ENCODE measurements at regions of chr3 and their contacts with region 1.

Region 1: DNA sequence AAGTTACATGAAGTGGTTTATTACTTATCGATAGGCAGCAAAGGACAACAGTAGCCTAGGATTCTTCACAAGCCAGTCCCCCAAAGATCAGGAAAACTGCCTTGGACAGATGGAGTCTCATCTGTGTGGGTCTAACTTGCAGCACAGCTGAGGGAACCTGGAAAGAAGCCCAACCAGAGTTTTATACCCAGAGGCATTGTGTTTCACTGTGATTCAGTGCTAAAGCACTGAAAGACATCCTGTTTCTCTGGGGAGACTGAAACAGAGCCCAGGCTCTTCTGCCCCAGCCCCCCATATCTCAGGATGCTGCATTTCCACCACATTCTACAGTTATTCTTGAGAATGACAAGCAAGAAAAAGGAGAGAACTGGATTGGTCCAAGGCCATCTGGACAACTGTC is 48.2 kb upstream of the PYDC2 start:
- DNase-seq: no peak
- ATAC-seq: no peak
- H3K4me3 ChIP-seq: no peak overlapping the region
- H3K27ac ChIP-seq: no peak overlapping the region
- H3K4me1 ChIP-seq: no peaks in the 10 kb centered on the region
- H3K27me3 ChIP-seq: no peaks in the 10 kb centered on the region
- CTCF ChIP-seq: no peak
- EP300 ChIP-seq: no peak
- POLR2A ChIP-seq: no peak
- RAD21 ChIP-seq: no peak

Region 2: DNA sequence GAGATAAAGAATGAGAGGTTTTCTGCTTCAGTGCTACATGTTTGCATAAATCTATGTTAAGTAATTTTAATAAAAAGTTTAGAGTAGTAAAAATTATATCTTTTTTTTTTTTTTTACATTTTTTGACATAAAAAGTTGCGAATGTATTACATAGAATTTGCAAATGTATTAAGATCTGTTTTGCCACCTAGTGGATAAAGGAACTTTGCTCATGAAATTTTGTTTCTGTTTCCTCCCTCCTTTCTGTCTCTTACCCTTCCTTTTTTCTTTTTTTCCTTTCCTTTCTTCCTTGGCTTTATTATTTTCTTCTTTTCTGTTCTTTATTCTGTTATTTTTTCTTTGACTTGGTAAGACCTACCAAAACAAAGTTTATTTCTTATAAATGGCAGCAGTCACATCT is 23.9 kb before region 1 on chr3:
- CTCF ChIA-PET with region 1: no interaction called
- POLR2A ChIA-PET with region 1: no interaction called
- in situ Hi-C with region 1: no loop called
- intact Hi-C with region 1: no loop called
- DNase-seq: no peak
- ATAC-seq: no peak
- H3K4me3 ChIP-seq: no peak overlapping the region
- H3K27ac ChIP-seq: no peak overlapping the region
- H3K4me1 ChIP-seq: no peaks in the 10 kb centered on the region
- H3K27me3 ChIP-seq: no peaks in the 10 kb centered on the region
- CTCF ChIP-seq: no peak
- EP300 ChIP-seq: no peak
- POLR2A ChIP-seq: no peak
- RAD21 ChIP-seq: no peak

Region 3: DNA sequence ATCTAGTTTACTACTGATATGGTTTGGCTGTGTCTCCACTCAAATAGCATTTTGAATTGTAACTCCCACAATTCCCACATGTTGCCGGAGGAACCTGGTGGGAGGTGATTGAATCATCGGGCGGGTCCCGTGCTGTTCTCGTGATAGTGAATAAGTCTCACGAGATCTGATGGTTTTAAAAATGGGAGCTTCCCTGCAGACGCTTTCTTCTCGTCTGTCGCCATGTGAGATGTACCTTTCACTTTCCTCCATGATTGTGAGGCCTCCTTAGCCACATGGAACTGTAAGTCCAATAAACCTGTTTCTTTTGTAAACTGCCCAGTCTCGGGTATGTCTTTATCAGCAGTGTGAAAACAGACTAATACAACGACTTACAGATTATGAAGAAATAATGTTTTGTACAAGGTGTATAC is 12.6 kb after region 1 on chr3:
- CTCF ChIA-PET with region 1: no interaction called
- POLR2A ChIA-PET with region 1: no interaction called
- in situ Hi-C with region 1: no loop called
- intact Hi-C with region 1: no loop called
- DNase-seq: no peak
- ATAC-seq: no peak
- H3K4me3 ChIP-seq: no peak overlapping the region
- H3K27ac ChIP-seq: no peak overlapping the region
- H3K4me1 ChIP-seq: peaks cover 6% of the 10 kb centered on the region
- H3K27me3 ChIP-seq: no peaks in the 10 kb centered on the region
- CTCF ChIP-seq: no peak
- EP300 ChIP-seq: no peak
- POLR2A ChIP-seq: no peak
- RAD21 ChIP-seq: no peak

Region 4: GRCh38 chr3:191702121-191702520 is 289.4 kb after region 1 on chr3:
- CTCF ChIA-PET with region 1: no interaction called
- POLR2A ChIA-PET with region 1: no interaction called
- in situ Hi-C with region 1: no loop called
- intact Hi-C with region 1: loop called (anchors 1 kb)
- DNase-seq: no peak
- ATAC-seq: peak; percentile 85
- H3K4me3 ChIP-seq: no peak overlapping the region
- H3K27ac ChIP-seq: no peak overlapping the region
- H3K4me1 ChIP-seq: no peaks in the 10 kb centered on the region
- H3K27me3 ChIP-seq: no peaks in the 10 kb centered on the region
- CTCF ChIP-seq: no peak; the same call in 1 of the 2 replicates
- EP300 ChIP-seq: no peak
- POLR2A ChIP-seq: no peak
- RAD21 ChIP-seq: no peak

Region 5: GRCh38 chr3:192092363-192093005 is 679.7 kb after region 1 on chr3:
- CTCF ChIA-PET with region 1: no interaction called
- POLR2A ChIA-PET with region 1: no interaction called
- in situ Hi-C with region 1: no loop called
- intact Hi-C with region 1: no loop called
- DNase-seq: no peak
- ATAC-seq: no peak
- H3K4me3 ChIP-seq: no peak overlapping the region
- H3K27ac ChIP-seq: no peak overlapping the region
- H3K4me1 ChIP-seq: no peaks in the 10 kb centered on the region
- H3K27me3 ChIP-seq: no peaks in the 10 kb centered on the region; a peak in 1 of 5 replicates
- CTCF ChIP-seq: no peak
- EP300 ChIP-seq: no peak
- POLR2A ChIP-seq: no peak
- RAD21 ChIP-seq: no peak